ENCODE measurements at regions of chr7 and their contacts with region 1.

Region 1: GRCh38 chr7:95596198-95597063 is at the start of gene PDK4:
- DNase-seq: peak; percentile 34
- ATAC-seq: peak; percentile 68
- H3K4me3 ChIP-seq: peak within 1 kb of the TSS; percentile 8 to 73 (median 60)
- H3K4me3 Mint-ChIP-seq: peak within 1 kb of the TSS; percentile 96
- H3K27ac ChIP-seq: peak within 1 kb of the TSS; percentile 38 to 53
- H3K27ac Mint-ChIP-seq: peak within 1 kb of the TSS; percentile 87
- H3K4me1 ChIP-seq: peaks cover 15 to 20% of the 10 kb centered on the region in 2 donors
- H3K4me1 Mint-ChIP-seq: peaks cover 31% of the 10 kb centered on the region
- H3K27me3 ChIP-seq: peaks cover 0 to 6% (median 0%) of the 10 kb centered on the region in 4 experiments
- H3K27me3 Mint-ChIP-seq: peaks cover 12% of the 10 kb centered on the region
- CTCF ChIP-seq: no peak
- total RNA-seq, gene PDK4: 6.8 and 7.1 TPM in 2 replicates

Region 2: GRCh38 chr7:95636140-95636940 is 39.9 kb after region 1 on chr7:
- CTCF ChIA-PET with region 1: no interaction called
- POLR2A ChIA-PET with region 1: no interaction called
- intact Hi-C with region 1: loop called (anchors 5 kb)
- DNase-seq: peak; percentile 7
- ATAC-seq: no peak
- H3K4me3 ChIP-seq: no peak overlapping the region
- H3K4me3 Mint-ChIP-seq: no peak overlapping the region
- H3K27ac ChIP-seq: no peak overlapping the region
- H3K27ac Mint-ChIP-seq: no peak overlapping the region
- H3K4me1 ChIP-seq: peaks cover 0 to 6% of the 10 kb centered on the region in 2 donors
- H3K4me1 Mint-ChIP-seq: peaks cover 13% of the 10 kb centered on the region
- H3K27me3 ChIP-seq: no peaks in the 10 kb centered on the region
- H3K27me3 Mint-ChIP-seq: no peaks in the 10 kb centered on the region
- CTCF ChIP-seq: no peak

Measured in B cell (primary cell).